ENCODE measurements at regions of chr2 and their contacts with region 1.

Region 1: DNA sequence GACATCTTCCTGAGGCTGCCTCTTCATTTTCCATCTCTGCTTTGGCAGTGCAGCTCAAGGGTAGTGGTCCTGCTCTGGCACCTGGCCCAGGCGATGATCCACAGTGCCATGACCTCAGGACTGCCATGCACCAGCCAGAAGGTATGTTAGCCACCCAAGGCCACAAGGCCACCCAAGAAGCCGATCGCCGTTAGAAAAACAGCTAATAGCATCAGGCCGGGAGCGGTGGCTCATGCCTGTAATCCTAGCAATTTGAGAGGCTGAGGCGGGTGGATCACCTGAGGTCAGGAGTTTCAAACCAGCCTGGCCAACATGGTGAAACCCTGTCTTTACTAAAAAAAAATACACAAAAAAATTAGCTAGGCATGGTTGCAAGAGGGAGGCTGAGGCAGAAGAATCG is 28.4 kb upstream of the UGGT1 start:
- DNase-seq: no peak
- ATAC-seq: no peak
- H3K4me3 ChIP-seq: no peak overlapping the region
- H3K27ac ChIP-seq: no peak overlapping the region
- H3K4me1 ChIP-seq: no peaks in the 10 kb centered on the region
- H3K27me3 ChIP-seq: peaks cover 2% of the 10 kb centered on the region
- CTCF ChIP-seq: no peak
- POLR2A ChIP-seq: no peak
- RAD21 ChIP-seq: no peak

Region 2: GRCh38 chr2:128090945-128091725 is 28.6 kb after region 1 on chr2 and contains the start of gene UGGT1:
- CTCF ChIA-PET with region 1: interaction called, 6 read pairs
- POLR2A ChIA-PET with region 1: no interaction called
- dilution Hi-C with region 1: no loop called
- in situ Hi-C with region 1: no loop called
- intact Hi-C with region 1: loop called (anchors 1 kb)
- DNase-seq: peak; percentile 96
- ATAC-seq: peak; percentile 98
- H3K4me3 ChIP-seq: peak within 1 kb of the TSS; percentile 92
- H3K27ac ChIP-seq: peak within 1 kb of the TSS; percentile 94
- H3K4me1 ChIP-seq: no peaks in the 10 kb centered on the region
- H3K27me3 ChIP-seq: no peaks in the 10 kb centered on the region
- CTCF ChIP-seq: no peak
- POLR2A ChIP-seq: peak; percentile 97
- RAD21 ChIP-seq: no peak
- total RNA-seq, gene UGGT1: 71.3 and 100.0 TPM in 2 replicates

Region 3: DNA sequence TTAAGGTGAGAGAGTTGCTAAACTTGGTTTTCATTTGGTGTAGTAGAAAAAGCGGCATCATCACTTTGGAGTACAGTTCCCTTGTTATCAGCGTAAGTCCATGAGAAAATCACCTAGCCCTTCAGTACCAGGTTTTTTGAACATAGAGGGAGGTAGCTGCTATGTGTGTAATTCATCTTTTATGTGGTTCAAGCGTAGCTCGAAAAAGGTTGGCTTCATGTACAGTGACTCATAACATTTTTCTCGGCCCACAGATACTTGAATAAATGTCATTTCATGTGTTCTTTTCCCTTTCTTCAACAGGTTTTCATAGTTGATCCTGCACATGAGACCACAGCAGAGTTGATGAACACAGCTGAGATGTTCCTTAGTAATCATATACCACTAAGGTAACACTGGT is 72.0 kb after region 1 on chr2:
- CTCF ChIA-PET with region 1: no interaction called
- POLR2A ChIA-PET with region 1: no interaction called
- dilution Hi-C with region 1: no loop called
- in situ Hi-C with region 1: no loop called
- intact Hi-C with region 1: no loop called
- DNase-seq: peak; percentile 34
- ATAC-seq: no peak
- H3K4me3 ChIP-seq: no peak overlapping the region
- H3K27ac ChIP-seq: no peak overlapping the region
- H3K4me1 ChIP-seq: no peaks in the 10 kb centered on the region
- H3K27me3 ChIP-seq: no peaks in the 10 kb centered on the region
- CTCF ChIP-seq: no peak
- POLR2A ChIP-seq: no peak
- RAD21 ChIP-seq: no peak

Region 4: GRCh38 chr2:129923265-129924091 is 1860.9 kb after region 1 on chr2:
- CTCF ChIA-PET with region 1: interaction called, 6 read pairs
- POLR2A ChIA-PET with region 1: no interaction called
- dilution Hi-C with region 1: no loop called
- in situ Hi-C with region 1: no loop called
- intact Hi-C with region 1: loop called (anchors 1 kb)
- DNase-seq: peak; percentile 37
- ATAC-seq: peak; percentile 80
- H3K4me3 ChIP-seq: no peak overlapping the region
- H3K27ac ChIP-seq: no peak overlapping the region
- H3K4me1 ChIP-seq: no peaks in the 10 kb centered on the region
- H3K27me3 ChIP-seq: no peaks in the 10 kb centered on the region; the same call in 1 of the 2 replicates
- CTCF ChIP-seq: peak; percentile 52
- POLR2A ChIP-seq: no peak
- RAD21 ChIP-seq: peak; percentile 59